ENCODE measurements at regions of chr1 and their contacts with region 1.

Region 1: DNA sequence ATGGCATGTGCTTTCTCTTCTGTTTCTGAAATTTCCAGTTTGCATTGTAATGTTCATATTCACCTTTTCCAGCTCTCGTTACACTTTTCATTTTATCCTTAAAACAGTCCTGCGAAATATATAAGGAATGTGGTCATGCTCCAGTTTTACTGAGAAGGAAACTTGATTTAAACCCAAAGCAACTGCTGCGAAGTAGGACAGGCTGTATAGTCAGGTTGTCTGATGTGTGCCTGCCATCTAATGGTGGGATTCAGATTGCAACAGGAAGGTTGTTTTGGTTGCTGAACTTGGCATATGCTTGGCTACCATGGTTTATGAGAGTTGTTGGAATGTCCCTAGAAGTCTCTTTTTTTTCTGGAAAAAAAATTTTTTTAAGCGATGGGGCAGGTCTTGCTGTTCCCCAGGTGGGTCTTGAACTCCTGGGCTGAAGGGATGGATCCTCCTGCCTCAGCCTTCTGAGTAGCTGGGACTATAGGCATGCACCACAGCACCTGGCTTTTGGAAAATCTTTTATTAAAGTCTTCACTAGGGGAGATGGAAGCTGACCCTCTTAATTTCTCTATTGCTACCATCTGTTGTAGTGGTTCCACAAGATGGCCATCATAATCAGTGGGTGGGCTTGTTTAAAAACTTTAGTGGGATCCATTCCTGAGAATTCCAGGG is 86.9 kb downstream of the UCK2 start:
- DNase-seq: peak; percentile 78
- ATAC-seq: peak; percentile 96
- H3K4me3 Mint-ChIP-seq: no peak overlapping the region
- H3K27ac Mint-ChIP-seq: no peak overlapping the region
- H3K4me1 Mint-ChIP-seq: peaks cover 4% of the 10 kb centered on the region
- H3K27me3 Mint-ChIP-seq: no peaks in the 10 kb centered on the region

Region 2: DNA sequence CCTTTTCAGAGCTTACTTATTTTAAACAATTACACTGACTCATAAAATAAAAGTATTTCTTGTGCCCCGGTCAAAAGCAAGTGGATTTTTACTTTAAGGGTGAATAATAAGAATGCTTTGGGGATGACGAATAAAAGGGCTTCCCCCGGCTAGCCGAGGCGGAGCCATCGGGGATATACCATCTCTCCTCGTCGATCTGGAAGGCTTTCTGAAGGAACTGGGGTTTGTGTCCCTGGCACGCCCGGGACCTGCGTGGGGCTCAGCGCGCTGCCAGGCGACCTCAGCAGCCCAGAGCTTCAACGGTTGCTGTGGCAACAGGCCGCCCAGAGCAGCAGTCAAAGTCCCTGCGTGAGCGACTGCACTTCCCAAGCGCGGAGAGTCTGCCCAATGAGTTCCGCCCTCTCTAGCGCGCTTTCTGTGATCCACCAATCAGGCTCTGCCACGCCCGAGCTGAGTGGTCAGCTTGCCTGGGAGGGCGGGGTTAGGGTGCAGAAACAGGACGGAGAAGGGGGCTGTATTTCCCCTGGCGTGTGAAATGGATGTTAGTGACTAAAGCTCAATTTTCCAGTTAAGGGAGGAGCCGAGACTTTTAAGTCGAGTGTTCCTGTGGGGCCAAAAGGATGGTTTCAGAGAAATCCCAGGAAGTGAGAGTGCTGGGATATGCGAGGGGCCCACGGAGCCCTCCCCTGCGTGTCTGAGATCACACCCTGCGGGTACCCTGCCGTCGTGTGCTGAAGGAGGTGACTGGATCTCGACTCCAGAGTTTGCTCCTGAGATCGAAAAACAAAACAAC is 316.2 kb before region 1 on chr1:
- CTCF ChIA-PET with region 1: interaction called, 50 read pairs
- DNase-seq: peak; percentile 98
- ATAC-seq: peak; percentile 99
- H3K4me3 Mint-ChIP-seq: peak overlapping the region; percentile 84
- H3K27ac Mint-ChIP-seq: peak overlapping the region; percentile 86
- H3K4me1 Mint-ChIP-seq: peaks cover 34% of the 10 kb centered on the region
- H3K27me3 Mint-ChIP-seq: peaks cover 37% of the 10 kb centered on the region

Region 3: GRCh38 chr1:165717918-165718515 is 196.2 kb before region 1 on chr1:
- CTCF ChIA-PET with region 1: interaction called, 10 read pairs
- DNase-seq: peak; percentile 57
- ATAC-seq: no peak
- H3K4me3 Mint-ChIP-seq: no peak overlapping the region
- H3K27ac Mint-ChIP-seq: no peak overlapping the region
- H3K4me1 Mint-ChIP-seq: no peaks in the 10 kb centered on the region
- H3K27me3 Mint-ChIP-seq: peaks cover 7% of the 10 kb centered on the region

Region 4: GRCh38 chr1:165903672-165904071 is 10.6 kb before region 1 on chr1:
- CTCF ChIA-PET with region 1: interaction called, 10 read pairs
- DNase-seq: no peak
- ATAC-seq: no peak
- H3K4me3 Mint-ChIP-seq: no peak overlapping the region
- H3K27ac Mint-ChIP-seq: peak overlapping the region; percentile 26
- H3K4me1 Mint-ChIP-seq: peaks cover 7% of the 10 kb centered on the region
- H3K27me3 Mint-ChIP-seq: no peaks in the 10 kb centered on the region

Region 5: GRCh38 chr1:165928075-165928731 is 13.9 kb after region 1 on chr1:
- CTCF ChIA-PET with region 1: interaction called, 26 read pairs
- DNase-seq: peak; percentile 63
- ATAC-seq: peak; percentile 64
- H3K4me3 Mint-ChIP-seq: no peak overlapping the region
- H3K27ac Mint-ChIP-seq: no peak overlapping the region
- H3K4me1 Mint-ChIP-seq: no peaks in the 10 kb centered on the region
- H3K27me3 Mint-ChIP-seq: peaks cover 3% of the 10 kb centered on the region

Region 6: GRCh38 chr1:165954940-165955339 is 40.7 kb after region 1 on chr1:
- CTCF ChIA-PET with region 1: no interaction called
- DNase-seq: no peak
- ATAC-seq: no peak
- H3K4me3 Mint-ChIP-seq: no peak overlapping the region
- H3K27ac Mint-ChIP-seq: no peak overlapping the region
- H3K4me1 Mint-ChIP-seq: no peaks in the 10 kb centered on the region
- H3K27me3 Mint-ChIP-seq: no peaks in the 10 kb centered on the region

Region 7: GRCh38 chr1:165965857-165966256 is 51.6 kb after region 1 on chr1:
- CTCF ChIA-PET with region 1: no interaction called
- DNase-seq: no peak
- ATAC-seq: no peak
- H3K4me3 Mint-ChIP-seq: no peak overlapping the region
- H3K27ac Mint-ChIP-seq: no peak overlapping the region
- H3K4me1 Mint-ChIP-seq: no peaks in the 10 kb centered on the region
- H3K27me3 Mint-ChIP-seq: peaks cover 6% of the 10 kb centered on the region